ENCODE measurements at regions of chr16 and their contacts with region 1.

Region 1: DNA sequence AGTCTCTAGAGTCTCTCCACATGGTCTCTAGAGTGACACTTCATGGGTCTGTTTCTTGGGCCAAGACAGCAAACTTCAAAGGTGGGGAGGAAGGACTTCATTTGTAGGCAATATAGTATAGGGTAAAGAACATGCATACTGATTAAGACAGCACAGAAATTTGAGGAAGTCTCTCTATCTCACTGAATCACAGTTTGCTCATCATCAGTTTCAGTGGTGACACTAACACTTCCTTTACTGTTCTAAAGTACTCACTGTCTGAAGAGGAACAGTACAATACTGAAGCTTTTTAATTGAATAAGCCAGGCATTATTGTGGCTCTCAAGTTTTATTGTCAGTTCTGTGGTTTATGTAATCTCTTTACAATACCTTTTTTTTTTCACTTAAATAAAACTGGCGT is 656.4 kb upstream of the CDH8 start:
- DNase-seq: no peak
- H3K4me3 ChIP-seq: no peak overlapping the region
- H3K27ac ChIP-seq: no peak overlapping the region
- H3K4me1 ChIP-seq: no peaks in the 10 kb centered on the region
- H3K27me3 ChIP-seq: no peaks in the 10 kb centered on the region
- CTCF ChIP-seq: no peak

Region 2: GRCh38 chr16:62549875-62550274 is 142.8 kb before region 1 on chr16:
- CTCF ChIA-PET with region 1: no interaction called
- POLR2A ChIA-PET with region 1: no interaction called
- intact Hi-C with region 1: no loop called
- DNase-seq: no peak
- H3K4me3 ChIP-seq: no peak overlapping the region
- H3K27ac ChIP-seq: no peak overlapping the region
- H3K4me1 ChIP-seq: no peaks in the 10 kb centered on the region
- H3K27me3 ChIP-seq: no peaks in the 10 kb centered on the region
- CTCF ChIP-seq: no peak

Region 3: GRCh38 chr16:64295466-64295865 is 1602.8 kb after region 1 on chr16:
- CTCF ChIA-PET with region 1: interaction called, 10 read pairs
- POLR2A ChIA-PET with region 1: no interaction called
- intact Hi-C with region 1: no loop called
- DNase-seq: no peak
- H3K4me3 ChIP-seq: no peak overlapping the region
- H3K27ac ChIP-seq: no peak overlapping the region
- H3K4me1 ChIP-seq: no peaks in the 10 kb centered on the region
- H3K27me3 ChIP-seq: no peaks in the 10 kb centered on the region
- CTCF ChIP-seq: no peak

Measured in PC-9 (cell line).